ENCODE measurements at regions of chr17 and their contacts with region 1.

Region 1: GRCh38 chr17:43673516-43674323 is 12.0 kb upstream of the MEOX1 start:
- DNase-seq: peak; percentile 82
- H3K4me3 Mint-ChIP-seq: no peak overlapping the region
- H3K27ac Mint-ChIP-seq: no peak overlapping the region
- H3K4me1 Mint-ChIP-seq: peaks cover 42% of the 10 kb centered on the region
- H3K27me3 Mint-ChIP-seq: peaks cover 38% of the 10 kb centered on the region

Region 2: DNA sequence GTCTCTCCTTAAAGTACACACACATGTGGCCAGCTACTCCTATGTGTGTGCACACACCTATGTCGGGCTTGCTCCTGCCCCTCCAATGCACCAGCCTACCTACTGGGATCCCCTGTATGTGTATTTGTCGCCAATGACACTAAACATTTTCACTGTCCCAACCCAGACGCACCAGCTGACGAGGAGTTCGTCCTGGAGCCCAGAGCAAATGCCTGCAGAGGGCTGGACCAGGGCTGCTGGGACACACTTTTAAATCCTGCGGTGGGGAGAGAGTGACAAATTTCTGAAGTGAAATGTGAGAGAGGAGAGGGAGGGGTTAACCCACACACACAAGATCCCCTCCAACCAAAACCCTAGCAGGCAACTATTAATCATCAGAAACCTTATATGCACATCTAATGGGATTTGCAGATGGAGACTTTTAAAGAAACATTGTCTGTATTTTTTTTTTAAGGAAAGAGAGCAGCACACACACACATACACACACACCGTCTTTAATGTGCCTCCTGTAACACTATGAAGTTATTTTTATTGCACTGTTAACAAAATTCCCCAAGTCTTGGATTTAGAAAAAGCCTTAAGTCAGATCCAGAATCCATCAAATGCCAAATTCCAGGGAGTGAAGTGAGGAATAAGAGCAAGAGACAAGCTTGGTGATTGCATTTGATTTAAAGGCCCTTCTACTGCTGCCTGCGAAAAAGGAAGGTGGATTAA is 11.9 kb before region 1 on chr17 and contains the start of gene MEOX1:
- CTCF ChIA-PET with region 1: interaction called, 10 read pairs
- DNase-seq: peak; percentile 31
- H3K4me3 Mint-ChIP-seq: peak within 1 kb of the TSS; percentile 59
- H3K27ac Mint-ChIP-seq: peak within 1 kb of the TSS; percentile 89
- H3K4me1 Mint-ChIP-seq: peaks cover 59% of the 10 kb centered on the region
- H3K27me3 Mint-ChIP-seq: peaks cover 33% of the 10 kb centered on the region